ENCODE measurements at regions of chr11 and their contacts with region 1.

Region 1: GRCh38 chr11:78564490-78565467 is 9.9 kb downstream of the NARS2 start:
- DNase-seq: peak; percentile 54
- H3K4me3 Mint-ChIP-seq: no peak overlapping the region
- H3K27ac Mint-ChIP-seq: no peak overlapping the region
- H3K4me1 Mint-ChIP-seq: peaks cover 27% of the 10 kb centered on the region
- H3K27me3 Mint-ChIP-seq: no peaks in the 10 kb centered on the region

Region 2: DNA sequence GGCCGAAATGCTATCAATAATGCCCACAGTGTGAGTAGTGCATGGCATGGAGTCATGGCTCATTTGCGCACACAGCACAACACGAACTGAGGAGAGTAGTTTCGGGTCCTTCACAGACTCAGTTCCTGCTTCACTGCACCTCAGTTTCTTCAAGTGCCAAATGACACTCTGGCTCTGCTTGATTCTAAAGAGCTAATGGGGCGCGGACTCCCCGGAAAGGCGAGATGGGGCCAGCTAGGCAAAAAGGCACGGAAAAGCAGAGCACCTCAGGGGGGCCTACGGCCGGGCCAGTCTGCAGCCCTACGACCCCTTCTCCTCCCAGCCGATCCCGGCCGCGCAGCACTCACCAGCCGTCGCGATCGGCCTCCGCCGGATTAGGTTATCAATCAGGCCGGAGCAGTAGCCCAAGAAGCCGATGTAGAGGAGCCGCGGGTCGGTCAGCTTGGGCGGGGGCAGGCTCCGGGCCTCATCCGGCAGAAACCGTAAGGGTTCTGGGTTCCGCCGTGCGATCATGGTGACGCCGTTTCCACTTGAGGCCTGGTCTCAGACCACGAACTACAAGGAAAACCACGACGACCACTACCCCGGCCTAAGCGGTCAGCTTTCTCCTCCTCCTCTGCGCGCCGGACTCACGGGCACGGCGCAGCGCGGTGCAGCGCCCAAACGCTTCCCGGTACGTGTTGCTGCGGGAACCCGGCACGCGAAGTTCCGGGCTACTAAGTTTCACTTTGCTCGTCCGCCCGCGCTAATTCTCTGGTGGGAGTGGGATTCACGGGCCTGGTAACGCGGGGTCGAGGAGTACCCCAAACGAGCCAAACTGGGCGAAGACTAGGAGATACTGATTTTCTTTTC is 485.3 kb before region 1 on chr11 and contains the start of gene NDUFC2:
- CTCF ChIA-PET with region 1: interaction called, 5 read pairs
- intact Hi-C with region 1: loop called (anchors 5 kb)
- DNase-seq: peak; percentile 75
- H3K4me3 Mint-ChIP-seq: peak within 1 kb of the TSS; percentile 92
- H3K27ac Mint-ChIP-seq: peak within 1 kb of the TSS; percentile 86
- H3K4me1 Mint-ChIP-seq: peaks cover 45% of the 10 kb centered on the region
- H3K27me3 Mint-ChIP-seq: no peaks in the 10 kb centered on the region
- total RNA-seq, gene NDUFC2: 180 to 183 TPM

Region 3: GRCh38 chr11:78149646-78150045 is 415.1 kb before region 1 on chr11:
- CTCF ChIA-PET with region 1: no interaction called
- intact Hi-C with region 1: loop called (anchors 1 kb)
- DNase-seq: peak; percentile 41
- H3K4me3 Mint-ChIP-seq: no peak overlapping the region
- H3K27ac Mint-ChIP-seq: no peak overlapping the region
- H3K4me1 Mint-ChIP-seq: no peaks in the 10 kb centered on the region
- H3K27me3 Mint-ChIP-seq: no peaks in the 10 kb centered on the region

Region 4: DNA sequence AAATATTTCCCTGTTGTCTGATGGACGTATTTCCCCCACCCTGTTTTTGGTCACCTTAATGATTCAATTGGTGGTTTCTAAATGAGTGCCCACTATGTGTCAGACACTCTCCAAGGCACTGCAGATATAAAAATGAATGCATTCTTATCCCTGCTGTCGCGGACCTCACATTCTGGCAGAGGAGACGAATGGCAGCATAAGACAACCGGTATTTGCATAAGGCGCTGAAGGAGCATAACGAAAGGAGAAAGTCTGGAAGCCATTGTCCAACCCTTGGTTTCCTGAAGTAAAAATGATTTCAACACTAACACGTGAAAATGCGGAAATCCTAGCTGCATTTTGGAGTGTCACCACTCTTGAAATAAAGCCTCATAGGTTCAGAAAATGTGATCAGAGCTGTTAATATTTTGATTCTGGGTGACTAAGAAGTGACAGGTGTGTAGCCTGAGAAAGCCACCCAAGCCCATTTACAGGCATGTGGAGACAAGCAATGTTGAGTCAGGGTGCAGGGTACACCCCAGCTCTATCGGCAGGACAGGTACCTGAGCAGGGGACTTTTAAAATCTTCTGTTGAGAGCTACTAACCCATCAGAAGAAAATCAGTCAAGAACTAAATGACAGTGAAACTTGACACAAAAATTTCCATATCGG is 137.0 kb before region 1 on chr11:
- CTCF ChIA-PET with region 1: interaction called, 15 read pairs
- intact Hi-C with region 1: no loop called
- DNase-seq: peak; percentile 28
- H3K4me3 Mint-ChIP-seq: no peak overlapping the region
- H3K27ac Mint-ChIP-seq: peak overlapping the region; percentile 34
- H3K4me1 Mint-ChIP-seq: peaks cover 17% of the 10 kb centered on the region
- H3K27me3 Mint-ChIP-seq: no peaks in the 10 kb centered on the region

Region 5: GRCh38 chr11:78465169-78465942 is 99.4 kb before region 1 on chr11:
- CTCF ChIA-PET with region 1: interaction called, 6 read pairs
- intact Hi-C with region 1: loop called (anchors 2 kb)
- DNase-seq: peak; percentile 51
- H3K4me3 Mint-ChIP-seq: no peak overlapping the region
- H3K27ac Mint-ChIP-seq: peak overlapping the region; percentile 65
- H3K4me1 Mint-ChIP-seq: peaks cover 18% of the 10 kb centered on the region
- H3K27me3 Mint-ChIP-seq: no peaks in the 10 kb centered on the region

Region 6: GRCh38 chr11:78595436-78596130 is 30.8 kb after region 1 on chr11:
- CTCF ChIA-PET with region 1: no interaction called
- intact Hi-C with region 1: no loop called
- DNase-seq: no peak
- H3K4me3 Mint-ChIP-seq: no peak overlapping the region
- H3K27ac Mint-ChIP-seq: no peak overlapping the region
- H3K4me1 Mint-ChIP-seq: peaks cover 7% of the 10 kb centered on the region
- H3K27me3 Mint-ChIP-seq: no peaks in the 10 kb centered on the region

Measured in activated naive CD4-positive, alpha-beta T cell treated with anti-CD3 and anti-CD28 coated beads for 36 hours (primary cell).